Calu3 (cell line): ENCODE measurements at regions of chr3 and their contacts with region 1.

Region 1: GRCh38 chr3:32177702-32178198 is 60.7 kb upstream of the CMTM8 start:
- DNase-seq: peak; percentile 83
- H3K4me3 Mint-ChIP-seq: peak overlapping the region; percentile 45
- H3K27ac Mint-ChIP-seq: no peak overlapping the region
- H3K4me1 Mint-ChIP-seq: peaks cover 18% of the 10 kb centered on the region
- H3K27me3 Mint-ChIP-seq: no peaks in the 10 kb centered on the region
- CTCF ChIP-seq: peak; percentile 80

Region 2: DNA sequence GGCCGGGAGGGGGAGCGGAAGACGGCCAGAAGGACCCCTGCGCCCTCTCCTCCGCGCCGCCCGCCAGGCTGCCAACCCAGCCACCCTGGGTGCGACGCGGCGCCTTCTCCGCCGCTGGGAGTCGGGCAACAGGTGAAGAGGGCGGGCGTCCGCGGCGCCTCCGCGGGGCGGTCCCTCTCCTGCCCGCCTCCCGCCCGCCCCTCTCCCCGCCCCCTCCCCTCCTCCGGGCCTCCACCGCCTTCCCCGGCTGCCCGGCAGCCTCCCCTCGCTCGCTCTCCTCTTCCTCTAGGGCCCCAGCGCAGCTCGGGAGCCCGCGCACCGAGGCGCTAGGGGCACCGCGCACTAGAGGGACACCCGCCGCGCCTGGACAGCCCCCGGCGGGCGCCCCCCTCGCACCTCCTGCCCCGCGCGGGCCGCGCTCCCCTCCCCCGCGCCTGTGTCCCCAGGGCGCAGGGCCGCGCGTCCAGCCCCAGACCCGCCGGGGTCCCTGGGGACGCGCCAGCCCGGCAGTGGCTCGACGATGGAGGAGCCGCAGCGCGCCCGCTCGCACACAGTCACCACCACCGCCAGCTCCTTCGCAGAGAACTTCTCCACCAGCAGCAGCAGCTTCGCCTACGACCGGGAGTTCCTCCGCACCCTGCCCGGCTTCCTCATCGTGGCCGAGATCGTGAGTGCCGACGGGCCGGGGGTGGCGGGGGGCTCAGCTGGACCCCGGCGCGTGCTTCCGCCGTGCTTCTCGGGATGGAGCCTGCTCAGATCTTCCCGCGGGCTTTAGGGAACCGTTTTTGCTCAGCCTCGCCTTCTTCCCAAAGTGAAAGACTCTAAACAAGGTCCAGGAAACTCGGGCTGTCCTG is 60.9 kb after region 1 on chr3 and contains the start of gene CMTM8:
- CTCF ChIA-PET with region 1: interaction called, 4 read pairs
- intact Hi-C with region 1: loop called (anchors 5 kb)
- DNase-seq: peak; percentile 79
- H3K4me3 Mint-ChIP-seq: peak within 1 kb of the TSS; percentile 81
- H3K27ac Mint-ChIP-seq: peak within 1 kb of the TSS; percentile 50
- H3K4me1 Mint-ChIP-seq: peaks cover 38% of the 10 kb centered on the region
- H3K27me3 Mint-ChIP-seq: peaks cover 11% of the 10 kb centered on the region
- CTCF ChIP-seq: no peak
- total RNA-seq, gene CMTM8: 19.0 and 19.9 TPM in 2 replicates

Region 3: GRCh38 chr3:32340039-32340438 is 162.3 kb after region 1 on chr3:
- CTCF ChIA-PET with region 1: interaction called, 3 read pairs
- intact Hi-C with region 1: loop called (anchors 1 kb)
- DNase-seq: peak; percentile 13
- H3K4me3 Mint-ChIP-seq: no peak overlapping the region
- H3K27ac Mint-ChIP-seq: no peak overlapping the region
- H3K4me1 Mint-ChIP-seq: no peaks in the 10 kb centered on the region
- H3K27me3 Mint-ChIP-seq: no peaks in the 10 kb centered on the region
- CTCF ChIP-seq: no peak

Region 4: GRCh38 chr3:32467333-32468070 is 289.8 kb after region 1 on chr3:
- CTCF ChIA-PET with region 1: no interaction called
- intact Hi-C with region 1: loop called (anchors 5 kb)
- DNase-seq: peak; percentile 83
- H3K4me3 Mint-ChIP-seq: no peak overlapping the region
- H3K27ac Mint-ChIP-seq: no peak overlapping the region
- H3K4me1 Mint-ChIP-seq: peaks cover 33% of the 10 kb centered on the region
- H3K27me3 Mint-ChIP-seq: no peaks in the 10 kb centered on the region
- CTCF ChIP-seq: peak; percentile 97

Region 5: DNA sequence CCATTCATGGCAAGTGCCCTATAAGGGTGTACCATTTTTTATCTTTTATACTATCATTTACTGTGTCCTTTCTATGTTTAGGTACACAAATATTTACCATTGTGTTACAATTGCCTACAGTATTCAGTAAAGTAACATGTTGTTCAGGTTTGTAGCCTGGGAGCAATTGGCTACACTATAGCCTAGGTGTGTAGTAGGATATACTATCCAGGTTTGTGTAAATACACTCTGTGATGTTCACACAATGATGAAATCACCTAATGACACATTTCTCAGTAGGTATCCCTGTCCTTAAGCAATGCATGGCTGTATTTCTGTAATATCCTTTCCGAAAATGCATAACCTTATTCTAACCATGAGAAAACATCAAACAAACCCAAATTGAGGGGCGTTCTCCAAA is 489.4 kb after region 1 on chr3:
- CTCF ChIA-PET with region 1: no interaction called
- intact Hi-C with region 1: loop called (anchors 2 kb)
- DNase-seq: no peak
- H3K4me3 Mint-ChIP-seq: no peak overlapping the region
- H3K27ac Mint-ChIP-seq: no peak overlapping the region
- H3K4me1 Mint-ChIP-seq: no peaks in the 10 kb centered on the region
- H3K27me3 Mint-ChIP-seq: peaks cover 16% of the 10 kb centered on the region
- CTCF ChIP-seq: no peak